A673 (cell line): ENCODE measurements at regions of chr17 and their contacts with region 1.

Region 1: DNA sequence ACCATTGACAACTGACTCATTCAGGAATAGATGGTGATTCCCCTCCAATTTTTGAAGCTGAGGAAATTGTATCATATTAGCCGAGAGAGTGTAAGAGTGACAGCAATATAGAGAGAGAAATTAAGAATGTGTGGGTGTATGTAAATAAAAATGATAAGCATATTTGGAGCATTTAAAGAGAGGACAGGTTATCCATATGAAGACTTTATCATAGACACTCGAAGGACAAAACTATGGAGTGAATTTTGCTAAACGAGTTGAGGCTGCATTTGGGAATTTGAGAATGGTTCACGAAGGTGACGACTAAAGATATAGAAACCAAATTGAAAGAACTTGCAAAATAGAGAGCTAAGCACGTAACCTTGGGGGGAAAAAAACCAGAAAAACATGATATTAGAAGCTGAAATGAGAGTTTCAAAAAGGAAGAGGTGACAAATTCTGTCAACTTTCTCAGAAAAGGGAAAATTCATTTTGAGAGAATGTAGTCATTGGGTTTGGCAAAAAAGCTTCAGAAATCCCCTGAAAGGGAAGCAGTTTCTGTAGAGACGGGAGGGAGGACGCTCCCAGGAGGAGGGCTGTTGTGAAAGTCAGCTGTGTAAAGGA is 129.7 kb downstream of the KCNJ2 start:
- DNase-seq: no peak
- H3K4me3 ChIP-seq: no peak overlapping the region
- H3K27ac ChIP-seq: no peak overlapping the region
- H3K4me1 ChIP-seq: no peaks in the 10 kb centered on the region
- H3K27me3 ChIP-seq: no peaks in the 10 kb centered on the region
- CTCF ChIP-seq: no peak

Region 2: DNA sequence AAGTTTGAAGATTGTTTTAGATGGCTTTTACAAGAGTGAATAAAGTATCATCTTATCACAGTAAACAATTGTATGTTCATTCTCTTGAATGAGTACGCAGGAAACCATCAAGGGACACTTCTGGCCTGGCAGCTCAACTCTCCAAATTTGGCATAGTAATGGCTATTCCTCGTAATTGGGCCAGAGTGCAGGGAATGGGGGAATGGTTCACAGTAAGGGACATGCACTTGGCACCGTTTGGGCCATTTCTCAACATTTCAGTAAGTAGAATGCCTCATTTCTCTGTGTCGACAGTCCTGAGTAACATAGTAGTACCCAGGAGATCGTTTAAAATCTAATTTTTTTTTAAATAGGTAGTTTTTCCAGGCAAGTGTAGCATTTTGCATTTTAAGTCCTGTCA is 179.9 kb after region 1 on chr17:
- CTCF ChIA-PET with region 1: no interaction called
- POLR2A ChIA-PET with region 1: interaction called, 20 read pairs
- intact Hi-C with region 1: no loop called
- DNase-seq: no peak
- H3K4me3 ChIP-seq: no peak overlapping the region
- H3K27ac ChIP-seq: no peak overlapping the region
- H3K4me1 ChIP-seq: no peaks in the 10 kb centered on the region
- H3K27me3 ChIP-seq: no peaks in the 10 kb centered on the region
- CTCF ChIP-seq: no peak